HEK293 (cell line): ENCODE measurements at regions of chr5 and their contacts with region 1.

Region 1: DNA sequence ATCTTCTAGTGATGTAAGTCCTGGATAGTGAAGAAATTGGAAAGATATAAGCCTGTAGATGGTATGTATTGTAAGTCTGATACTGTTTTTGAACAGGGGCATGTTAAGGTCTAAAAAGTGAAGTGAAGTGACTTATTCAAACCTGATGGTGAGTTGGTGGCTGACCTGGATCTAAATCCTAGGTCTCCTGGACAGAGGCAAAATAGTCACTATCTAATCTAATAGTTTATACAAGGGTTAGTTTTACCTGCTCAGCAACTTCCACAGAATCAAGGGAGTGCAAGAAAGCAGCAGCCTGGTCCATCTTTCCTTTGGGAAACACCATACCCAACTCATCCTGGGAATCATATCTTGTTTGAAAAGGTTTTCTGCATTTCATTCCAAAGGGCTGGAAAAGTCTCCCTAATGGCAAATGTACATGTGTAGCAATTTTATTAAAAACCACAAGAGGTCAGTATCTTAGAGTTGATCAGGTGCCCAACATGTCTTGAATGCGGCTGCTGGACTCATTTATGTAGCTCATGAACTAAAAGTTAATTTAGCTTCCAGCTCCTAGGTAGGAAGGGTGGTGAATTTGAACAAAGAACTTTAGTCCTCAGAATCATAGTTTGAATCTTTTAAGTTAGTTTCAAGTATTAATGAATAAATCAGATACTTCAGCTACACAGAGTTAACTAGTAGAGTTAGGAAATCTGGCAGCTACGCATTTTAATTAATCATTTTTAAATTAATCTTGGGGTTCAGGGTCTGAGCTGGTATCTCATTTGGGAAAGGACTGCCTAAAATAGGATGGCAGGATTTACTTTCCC is 26.0 kb downstream of the SKP2 start:
- H3K4me3 ChIP-seq: no peak overlapping the region
- H3K27ac ChIP-seq: no peak overlapping the region
- H3K4me1 ChIP-seq: no peaks in the 10 kb centered on the region
- CTCF ChIP-seq: peak; percentile 39; the same call in 1 of the 2 replicates

Region 2: GRCh38 chr5:36164461-36164860 is 13.5 kb before region 1 on chr5:
- CTCF ChIA-PET with region 1: interaction called, 15 read pairs
- POLR2A ChIA-PET with region 1: interaction called, 3 read pairs
- H3K4me3 ChIP-seq: no peak overlapping the region
- H3K27ac ChIP-seq: no peak overlapping the region
- H3K4me1 ChIP-seq: no peaks in the 10 kb centered on the region
- CTCF ChIP-seq: no peak